Caco-2 (cell line): ENCODE measurements at regions of chr7 and their contacts with region 1.

Region 1: DNA sequence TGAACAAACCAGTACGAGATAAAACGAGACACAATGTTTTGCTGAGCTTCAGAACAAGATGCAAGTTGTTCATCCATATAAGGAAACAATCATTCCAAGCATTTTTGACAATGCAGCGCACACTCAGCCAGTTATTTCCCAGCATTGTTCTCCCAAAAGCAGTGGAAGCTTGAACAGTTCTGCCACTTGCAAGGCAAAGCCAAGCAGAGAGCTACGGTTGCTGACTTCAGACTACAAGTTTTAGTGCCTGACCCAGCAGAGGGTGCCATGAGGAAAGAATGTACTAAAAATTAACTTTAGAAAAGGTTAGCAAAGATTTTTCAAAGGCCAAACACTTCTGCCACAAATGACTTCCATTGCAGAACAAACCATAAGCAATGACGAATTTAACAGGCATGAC is 152.5 kb downstream of the SLC25A13 start:
- DNase-seq: peak; percentile 47 to 53
- H3K4me3 ChIP-seq: no peak overlapping the region
- H3K4me3 Mint-ChIP-seq: no peak overlapping the region
- H3K27ac Mint-ChIP-seq: no peak overlapping the region
- H3K4me1 ChIP-seq: peaks cover 35% of the 10 kb centered on the region
- H3K4me1 Mint-ChIP-seq: peaks cover 23% of the 10 kb centered on the region
- H3K27me3 ChIP-seq: no peaks in the 10 kb centered on the region
- H3K27me3 Mint-ChIP-seq: no peaks in the 10 kb centered on the region
- CTCF ChIP-seq: no peak

Region 2: GRCh38 chr7:96097835-96098234 is 71.6 kb before region 1 on chr7:
- CTCF ChIA-PET with region 1: no interaction called
- POLR2A ChIA-PET with region 1: no interaction called
- intact Hi-C with region 1: no loop called
- DNase-seq: no peak
- H3K4me3 ChIP-seq: no peak overlapping the region
- H3K4me3 Mint-ChIP-seq: no peak overlapping the region
- H3K27ac Mint-ChIP-seq: no peak overlapping the region
- H3K4me1 ChIP-seq: no peaks in the 10 kb centered on the region
- H3K4me1 Mint-ChIP-seq: no peaks in the 10 kb centered on the region
- H3K27me3 ChIP-seq: no peaks in the 10 kb centered on the region
- H3K27me3 Mint-ChIP-seq: no peaks in the 10 kb centered on the region
- CTCF ChIP-seq: no peak

Region 3: DNA sequence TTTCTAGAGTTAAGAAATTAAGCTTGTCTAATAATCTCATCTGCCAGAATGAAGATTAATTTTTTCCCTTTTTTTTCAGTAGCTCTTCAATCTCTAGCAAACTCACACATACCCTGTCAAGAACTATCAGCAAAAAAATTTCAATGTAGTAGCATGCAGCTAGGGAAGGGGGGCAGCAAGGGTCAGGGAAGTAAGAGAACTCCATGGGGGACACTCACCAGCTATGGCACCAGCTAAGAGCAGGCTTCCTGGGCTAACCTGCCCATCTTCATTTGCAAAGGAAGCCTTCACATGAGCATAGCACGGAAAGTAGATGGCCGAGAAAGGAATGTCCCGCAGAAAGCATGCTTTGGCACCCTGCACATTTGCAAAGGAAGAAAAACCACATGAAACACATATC is 37.9 kb before region 1 on chr7:
- CTCF ChIA-PET with region 1: no interaction called
- POLR2A ChIA-PET with region 1: no interaction called
- intact Hi-C with region 1: loop called (anchors 5 kb)
- DNase-seq: peak in 1 of 2 experiments; percentile 17
- H3K4me3 ChIP-seq: no peak overlapping the region
- H3K4me3 Mint-ChIP-seq: no peak overlapping the region
- H3K27ac Mint-ChIP-seq: no peak overlapping the region
- H3K4me1 ChIP-seq: peaks cover 9% of the 10 kb centered on the region
- H3K4me1 Mint-ChIP-seq: peaks cover 10% of the 10 kb centered on the region
- H3K27me3 ChIP-seq: no peaks in the 10 kb centered on the region
- H3K27me3 Mint-ChIP-seq: no peaks in the 10 kb centered on the region
- CTCF ChIP-seq: peak in 1 of 2 experiments; percentile 16